Activated T-helper 1 cell treated with anti-CD3 and anti-CD28 coated beads, Interleukin-12 subunit alpha, Interleukin-12 subunit beta, Interleukin-2, Interleukin-4 antibody, amounts not matched to agents 30 ng/mL and 10 ng/mL and 1 ng/mL, durations not matched to agents 14 hours and 24 hours and 36 hours (primary cell): ENCODE measurements at regions of chr3 and their contacts with region 1.

Region 1: GRCh38 chr3:196537319-196537984 is 22.3 kb upstream of the SMCO1 start:
- DNase-seq: peak; percentile 33
- H3K4me3 Mint-ChIP-seq: no peak overlapping the region
- H3K27ac Mint-ChIP-seq: no peak overlapping the region
- H3K4me1 Mint-ChIP-seq: peaks cover 5% of the 10 kb centered on the region
- H3K27me3 Mint-ChIP-seq: peaks cover 12% of the 10 kb centered on the region

Region 2: DNA sequence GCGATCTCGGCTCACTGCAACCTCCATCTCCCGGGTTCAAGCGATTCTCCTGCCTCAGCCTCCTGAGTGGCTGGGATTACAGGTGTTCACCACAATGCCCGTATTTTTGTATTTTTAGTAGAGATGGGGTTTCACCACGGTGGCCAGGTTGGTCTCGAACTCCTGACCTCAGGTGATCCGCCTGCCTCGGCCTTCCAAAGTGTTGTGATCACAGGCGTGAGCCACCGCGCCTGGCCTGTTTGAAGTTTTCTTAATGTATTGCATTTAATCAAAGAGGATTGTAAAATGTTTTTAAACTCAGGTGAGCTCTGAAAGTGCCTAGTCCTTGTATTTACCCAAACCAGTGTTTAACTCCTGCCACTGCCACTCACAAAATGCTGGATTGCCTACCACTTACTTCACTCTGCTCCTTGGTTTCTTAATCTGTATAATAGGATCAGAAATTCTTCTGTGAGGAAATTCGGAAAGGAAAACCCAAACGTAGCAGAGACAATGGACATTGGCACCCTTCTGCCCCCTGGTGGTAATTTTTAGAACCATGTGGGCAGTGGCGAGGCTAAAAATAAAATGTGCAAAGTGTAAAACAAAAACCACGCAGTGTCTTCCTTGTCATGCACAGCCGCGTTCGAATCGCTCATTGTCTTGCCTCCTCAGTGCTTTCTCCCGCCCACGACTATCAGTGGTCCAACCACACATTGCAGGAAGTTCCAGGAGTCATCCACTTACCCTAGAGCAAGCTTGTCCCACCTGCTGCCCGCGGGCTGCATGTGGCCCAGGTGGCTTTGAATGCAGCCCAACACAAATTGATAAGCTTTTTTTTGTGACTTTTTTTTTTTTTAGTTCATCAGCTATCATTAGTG is 147.3 kb after region 1 on chr3:
- intact Hi-C with region 1: loop called (anchors 1 kb)
- DNase-seq: peak; percentile 47
- H3K4me3 Mint-ChIP-seq: peak overlapping the region; percentile 1
- H3K27ac Mint-ChIP-seq: peak overlapping the region; percentile 9
- H3K4me1 Mint-ChIP-seq: peaks cover 29% of the 10 kb centered on the region
- H3K27me3 Mint-ChIP-seq: peaks cover 2% of the 10 kb centered on the region